ENCODE measurements at regions of chr22 and their contacts with region 1.

Region 1: DNA sequence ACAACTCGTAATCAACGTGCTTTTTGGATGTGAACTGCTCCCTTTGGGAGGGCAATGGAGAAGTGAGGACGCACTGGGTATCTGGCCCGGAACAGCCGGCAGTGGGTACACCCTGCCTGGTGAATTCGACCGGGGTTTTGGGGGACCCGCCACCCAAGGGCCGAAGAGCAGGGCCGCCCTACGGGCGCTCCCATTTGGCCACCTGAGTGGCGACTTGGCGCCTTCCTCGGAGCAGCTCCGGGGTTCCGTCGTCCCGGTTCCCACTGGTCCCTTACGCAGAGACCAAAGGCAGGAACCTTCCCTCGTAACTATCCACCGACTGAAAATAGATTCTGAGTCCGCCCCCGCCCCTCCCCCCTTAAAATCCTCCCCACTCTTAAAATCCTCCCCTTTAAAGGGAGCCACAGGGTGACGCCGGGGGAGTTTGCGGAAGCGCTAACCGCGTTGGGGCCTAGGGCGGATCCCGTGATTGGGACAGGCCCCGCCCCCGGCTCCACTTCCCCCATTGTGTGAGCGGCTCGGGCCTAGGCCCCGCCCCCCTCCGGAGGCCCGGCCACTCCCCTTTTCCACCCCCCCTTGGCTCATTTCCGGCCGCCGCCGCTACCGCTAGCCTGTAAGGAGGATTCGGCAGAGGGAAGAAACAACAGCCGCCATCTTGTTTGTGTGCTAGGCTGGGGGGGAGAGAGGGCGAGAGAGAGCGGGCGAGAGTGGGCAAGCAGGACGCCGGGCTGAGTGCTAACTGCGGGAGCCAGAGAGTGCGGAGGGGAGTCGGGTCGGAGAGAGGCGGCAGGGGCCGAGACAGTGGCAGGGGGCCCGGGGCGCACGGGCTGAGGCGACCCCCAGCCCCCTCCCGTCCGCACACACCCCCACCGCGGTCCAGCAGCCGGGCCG is 1.0 kb upstream of the EP300 start:
- H3K4me3 Mint-ChIP-seq: peak overlapping the region; percentile 100
- H3K27ac Mint-ChIP-seq: peak overlapping the region; percentile 100
- H3K4me1 Mint-ChIP-seq: peaks cover 32% of the 10 kb centered on the region
- H3K27me3 Mint-ChIP-seq: no peaks in the 10 kb centered on the region

Region 2: DNA sequence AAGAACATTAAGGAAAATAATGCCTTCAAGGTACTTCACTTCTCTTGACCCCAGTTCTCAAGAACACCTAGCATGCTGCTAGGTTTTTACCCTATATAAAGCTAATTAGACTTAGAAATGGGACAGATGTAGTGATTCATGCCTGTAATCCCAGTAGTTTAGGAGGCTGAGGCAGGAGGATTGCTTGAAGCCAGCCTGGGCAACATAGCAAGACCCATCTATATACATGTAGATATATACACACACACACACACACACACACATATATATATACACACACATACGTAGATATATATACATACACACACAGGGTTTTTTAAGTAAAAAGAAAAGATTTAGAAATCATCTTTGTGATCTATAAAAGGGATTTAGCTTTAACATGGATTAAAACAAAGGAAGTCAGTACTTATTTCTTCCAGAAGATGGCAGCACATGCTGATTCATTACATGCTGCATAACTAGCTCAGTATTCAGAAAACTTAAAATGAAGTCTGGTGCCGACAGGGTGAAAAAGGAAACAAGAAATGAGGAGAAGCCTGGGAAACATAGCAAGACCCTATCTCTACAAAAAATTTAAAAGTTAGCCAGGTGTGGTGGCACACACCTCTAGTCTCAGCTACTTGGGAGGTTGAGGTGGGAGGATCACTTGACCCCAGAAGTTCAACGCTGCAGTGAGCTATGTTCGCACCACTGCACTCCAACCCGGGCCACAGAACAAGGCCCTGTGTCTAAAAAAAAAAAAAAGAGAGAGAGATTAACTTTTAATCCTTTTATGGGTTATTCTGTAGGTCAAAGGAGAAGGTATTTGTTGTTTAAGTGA is 168.7 kb before region 1 on chr22:
- intact Hi-C with region 1: loop called (anchors 5 kb)
- H3K4me3 Mint-ChIP-seq: peak overlapping the region; percentile 2
- H3K27ac Mint-ChIP-seq: peak overlapping the region; percentile 77
- H3K4me1 Mint-ChIP-seq: peaks cover 5% of the 10 kb centered on the region
- H3K27me3 Mint-ChIP-seq: no peaks in the 10 kb centered on the region

Region 3: DNA sequence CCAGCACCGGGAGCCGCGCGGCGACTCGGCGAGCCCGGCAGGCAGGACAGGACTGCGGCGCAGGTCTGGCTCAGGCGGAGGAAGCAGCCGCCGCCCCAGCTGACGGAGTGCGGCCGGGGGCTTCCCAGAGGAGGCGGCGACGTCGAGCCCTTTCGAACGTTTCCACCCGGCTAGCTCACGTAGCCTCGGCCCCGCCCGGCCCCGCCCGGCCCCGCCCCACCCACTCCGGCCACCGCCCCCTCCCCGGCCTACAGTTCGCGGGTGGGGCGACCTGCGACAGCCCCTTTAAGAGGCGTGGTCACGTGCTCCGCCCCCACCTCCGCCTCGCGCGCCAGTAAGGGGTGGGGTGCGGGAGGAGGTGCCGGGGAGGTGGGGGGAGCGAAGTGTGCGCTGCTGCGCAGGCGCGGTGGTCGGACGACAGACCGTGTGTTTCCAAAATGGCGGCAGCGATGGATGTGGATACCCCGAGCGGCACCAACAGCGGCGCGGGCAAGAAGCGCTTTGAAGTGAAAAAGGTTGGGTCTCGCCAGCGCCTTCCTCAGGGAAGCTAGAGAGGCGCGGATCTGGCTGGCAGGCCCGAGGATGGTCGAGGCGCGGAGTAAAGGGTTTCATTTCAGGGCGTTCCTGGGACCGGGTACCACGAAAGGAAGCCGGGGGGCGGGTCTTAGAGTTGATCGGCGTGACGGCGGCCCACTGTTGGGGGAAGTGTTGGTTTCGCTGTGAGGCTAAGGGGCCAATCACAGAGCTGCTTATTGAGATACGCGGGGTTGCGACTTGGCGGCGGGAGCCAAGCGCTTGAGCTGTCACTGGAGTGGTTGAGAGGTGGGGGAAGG is 140.2 kb before region 1 on chr22 and contains the start of gene RBX1:
- intact Hi-C with region 1: loop called (anchors 1 kb)
- H3K4me3 Mint-ChIP-seq: peak within 1 kb of the TSS; percentile 98
- H3K27ac Mint-ChIP-seq: peak within 1 kb of the TSS; percentile 89
- H3K4me1 Mint-ChIP-seq: peaks cover 22% of the 10 kb centered on the region
- H3K27me3 Mint-ChIP-seq: no peaks in the 10 kb centered on the region

Region 4: GRCh38 chr22:40965936-40966725 is 125.2 kb before region 1 on chr22:
- intact Hi-C with region 1: loop called (anchors 5 kb)
- H3K4me3 Mint-ChIP-seq: no peak overlapping the region
- H3K27ac Mint-ChIP-seq: peak overlapping the region; percentile 79
- H3K4me1 Mint-ChIP-seq: peaks cover 37% of the 10 kb centered on the region
- H3K27me3 Mint-ChIP-seq: no peaks in the 10 kb centered on the region

Region 5: GRCh38 chr22:41022470-41023298 is 68.7 kb before region 1 on chr22:
- intact Hi-C with region 1: loop called (anchors 1 kb)
- H3K4me3 Mint-ChIP-seq: peak overlapping the region; percentile 92
- H3K27ac Mint-ChIP-seq: peak overlapping the region; percentile 97
- H3K4me1 Mint-ChIP-seq: peaks cover 28% of the 10 kb centered on the region
- H3K27me3 Mint-ChIP-seq: no peaks in the 10 kb centered on the region

Region 6: DNA sequence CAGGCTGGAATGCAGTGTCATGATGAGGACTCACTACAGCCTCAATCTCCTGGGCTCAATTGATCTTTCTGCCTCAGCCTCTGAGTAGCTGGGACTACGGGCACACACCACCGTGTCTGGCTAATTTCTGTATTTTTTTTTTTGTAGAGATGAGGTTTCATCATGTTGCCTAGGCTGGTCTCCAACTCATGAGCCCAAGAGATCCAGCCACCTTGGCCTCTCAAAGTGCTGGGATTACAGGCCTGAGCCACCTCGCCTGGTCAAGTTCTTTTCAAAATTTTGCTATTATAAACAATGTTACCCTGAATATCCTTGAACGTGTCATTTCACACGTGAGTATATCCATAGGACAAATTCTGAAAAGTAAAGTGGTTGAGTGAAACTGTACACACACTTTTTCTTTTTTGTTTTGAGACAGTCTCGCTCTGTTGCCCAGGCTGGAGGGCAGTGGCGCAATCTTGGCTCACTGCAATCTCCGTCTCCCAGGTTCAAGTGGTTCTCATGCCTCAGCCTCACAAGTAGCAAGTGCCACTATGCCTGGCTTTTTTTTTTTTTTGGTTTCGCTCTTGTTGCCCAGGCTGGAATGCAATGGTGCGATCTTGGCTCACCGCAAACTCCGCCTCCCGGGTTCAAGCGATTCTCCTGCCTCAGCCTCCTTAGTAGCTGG is 20.6 kb before region 1 on chr22:
- intact Hi-C with region 1: loop called (anchors 1 kb)
- H3K4me3 Mint-ChIP-seq: no peak overlapping the region
- H3K27ac Mint-ChIP-seq: peak overlapping the region; percentile 96
- H3K4me1 Mint-ChIP-seq: peaks cover 23% of the 10 kb centered on the region
- H3K27me3 Mint-ChIP-seq: no peaks in the 10 kb centered on the region

Measured in dendritic cell treated with granulocyte-macrophage colony-stimulating factor and Interleukin-4, amounts not matched to agents 40 ng/mL and 50 ng/mL, for 4 days (primary cell).